ENCODE measurements at regions of chr19 and their contacts with region 1.

Region 1: GRCh38 chr19:34540811-34541557 is 59.4 kb downstream of the WTIP start:
- DNase-seq: no peak
- ATAC-seq: no peak

Region 2: GRCh38 chr19:34633802-34634201 is 92.8 kb after region 1 on chr19:
- intact Hi-C with region 1: no loop called
- DNase-seq: no peak
- ATAC-seq: no peak

Region 3: DNA sequence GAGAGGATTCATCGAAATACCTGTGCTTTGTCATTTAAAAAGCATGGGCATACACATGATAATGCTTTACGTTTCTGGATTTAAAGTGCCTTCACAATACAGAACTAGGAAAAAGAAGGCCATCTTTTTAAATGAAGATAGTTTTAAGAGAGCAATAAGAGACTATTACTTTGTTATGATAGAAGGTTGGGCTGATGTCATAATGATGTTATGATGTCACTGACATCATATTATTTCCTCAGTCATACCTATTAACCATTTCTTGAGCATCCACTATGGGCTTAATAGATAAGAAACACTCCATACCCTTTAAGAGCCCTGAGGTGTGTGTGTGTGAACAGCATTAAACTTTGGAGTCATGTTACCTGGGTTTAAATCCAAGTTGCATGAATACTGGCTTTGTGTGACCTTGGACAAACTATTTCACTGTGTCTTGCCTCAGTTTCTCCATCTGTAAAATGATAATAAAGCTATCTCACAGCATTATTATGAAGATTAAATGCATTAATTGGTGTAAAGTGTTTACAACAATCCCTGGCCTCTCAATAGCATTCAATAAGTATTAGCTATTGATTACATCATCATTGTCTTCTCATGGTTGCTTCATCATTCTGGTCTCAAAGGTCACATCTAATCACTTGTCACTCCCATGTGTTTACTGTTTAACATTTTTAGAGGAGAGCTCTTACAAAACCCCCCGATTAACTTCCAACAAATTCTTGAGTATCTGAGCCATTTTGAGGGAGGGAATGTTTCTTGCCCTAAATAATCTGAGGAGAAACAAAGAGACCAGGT is 204.1 kb after region 1 on chr19:
- intact Hi-C with region 1: loop called in 1 of 2 experiments (anchors 2 kb)
- DNase-seq: no peak
- ATAC-seq: no peak